Activated B cell treated with CpG ODN at 0.5 μM for 24 hours (primary cell): ENCODE measurements at regions of chr5 and their contacts with region 1.

Region 1: DNA sequence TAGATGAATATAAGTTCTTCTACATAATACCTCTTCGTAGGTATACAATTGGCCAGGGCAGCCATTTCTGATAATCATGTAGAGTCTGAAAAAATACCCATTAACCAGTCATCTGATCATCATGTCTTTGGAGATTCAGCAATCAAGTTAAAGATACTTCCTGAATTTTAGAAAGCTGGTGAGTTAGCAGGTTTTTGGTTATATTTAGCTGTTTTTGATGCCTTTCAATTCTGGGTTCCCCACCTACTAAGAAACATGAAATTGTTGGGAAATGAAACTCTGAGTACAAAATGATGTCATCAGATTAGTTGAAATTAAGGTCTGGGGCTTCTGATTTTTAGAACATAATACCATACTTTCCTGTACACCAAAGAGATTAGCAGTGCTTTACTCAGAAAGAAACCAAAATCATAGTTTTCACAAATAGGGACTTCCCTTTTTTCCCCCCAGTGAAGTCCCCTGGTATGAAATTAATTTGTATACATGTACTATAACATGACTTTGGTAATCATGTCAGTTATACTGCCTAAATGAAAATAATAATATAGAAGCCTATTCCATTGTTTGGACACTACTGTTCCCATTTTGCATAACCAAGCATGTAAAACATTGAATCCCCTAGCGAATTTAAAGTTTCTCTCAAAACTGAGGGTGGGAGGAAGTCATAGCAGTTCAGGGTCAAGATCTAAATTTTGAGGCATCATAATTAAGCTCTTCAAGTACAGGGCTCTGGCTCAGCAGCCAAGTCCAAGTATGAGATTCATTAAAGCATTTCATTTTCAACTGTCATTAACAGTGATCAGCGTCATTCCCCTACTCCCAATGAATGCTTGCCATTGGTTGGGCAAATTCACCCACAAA is 17.9 kb downstream of the PRLR start:
- DNase-seq: no peak
- ATAC-seq: peak; percentile 86
- H3K4me3 Mint-ChIP-seq: peak overlapping the region; percentile 22
- H3K27ac Mint-ChIP-seq: peak overlapping the region; percentile 92
- H3K4me1 Mint-ChIP-seq: peaks cover 26% of the 10 kb centered on the region
- H3K27me3 Mint-ChIP-seq: peaks cover 2% of the 10 kb centered on the region
- CTCF ChIP-seq: no peak

Region 2: DNA sequence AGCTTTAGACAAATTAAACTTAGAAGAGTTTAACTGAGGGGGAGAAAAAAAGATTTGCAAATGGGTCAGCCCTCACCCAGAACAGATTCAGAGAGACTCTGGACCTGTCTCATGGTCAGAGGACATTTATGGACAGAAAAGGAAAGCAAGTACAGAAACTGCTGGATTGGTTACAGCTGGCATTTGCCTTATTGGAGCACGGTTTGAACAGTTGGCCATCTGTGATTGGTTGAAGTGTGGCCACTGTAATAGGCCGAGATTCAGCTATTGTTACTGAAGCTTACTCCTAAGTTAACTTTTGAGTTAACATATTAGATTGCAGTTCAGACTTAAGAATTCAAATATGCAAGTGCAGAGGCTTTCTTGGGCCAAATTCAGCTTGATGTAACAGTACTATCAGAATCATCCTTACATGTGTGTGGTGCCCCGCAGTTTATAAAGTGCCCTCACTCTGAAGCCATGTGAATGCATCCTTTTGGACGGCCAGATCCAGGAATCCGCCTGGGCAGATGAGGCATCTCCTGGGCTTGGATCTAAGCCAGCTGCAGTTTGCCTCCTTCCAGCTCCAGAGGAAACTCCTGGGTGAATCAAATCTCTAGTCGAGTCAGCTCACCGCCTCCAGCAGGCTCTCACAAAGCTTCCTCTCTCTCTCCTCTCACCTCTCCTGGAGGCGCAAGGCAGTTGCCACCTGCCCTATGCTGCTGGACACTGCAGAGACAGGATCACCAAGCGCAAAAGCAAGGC is 1485.8 kb before region 1 on chr5:
- CTCF ChIA-PET with region 1: no interaction called
- POLR2A ChIA-PET with region 1: no interaction called
- intact Hi-C with region 1: no loop called
- DNase-seq: no peak
- ATAC-seq: no peak
- H3K4me3 Mint-ChIP-seq: no peak overlapping the region
- H3K27ac Mint-ChIP-seq: no peak overlapping the region
- H3K4me1 Mint-ChIP-seq: no peaks in the 10 kb centered on the region
- H3K27me3 Mint-ChIP-seq: no peaks in the 10 kb centered on the region
- CTCF ChIP-seq: no peak

Region 3: GRCh38 chr5:34915139-34915855 is 297.1 kb before region 1 on chr5 and contains the starts of genes BRIX1 and RAD1:
- CTCF ChIA-PET with region 1: no interaction called
- POLR2A ChIA-PET with region 1: no interaction called
- intact Hi-C with region 1: loop called (anchors 1 kb)
- DNase-seq: peak; percentile 92
- ATAC-seq: peak; percentile 98
- H3K4me3 Mint-ChIP-seq: peak within 1 kb of the TSS; percentile 57
- H3K27ac Mint-ChIP-seq: no peak within 1 kb of the TSS
- H3K4me1 Mint-ChIP-seq: peaks cover 34% of the 10 kb centered on the region
- H3K27me3 Mint-ChIP-seq: no peaks in the 10 kb centered on the region
- CTCF ChIP-seq: no peak
- total RNA-seq, gene BRIX1: 40.6 and 42.4 TPM in 2 replicates
- total RNA-seq, gene RAD1: 20.2 and 24.4 TPM in 2 replicates

Region 4: DNA sequence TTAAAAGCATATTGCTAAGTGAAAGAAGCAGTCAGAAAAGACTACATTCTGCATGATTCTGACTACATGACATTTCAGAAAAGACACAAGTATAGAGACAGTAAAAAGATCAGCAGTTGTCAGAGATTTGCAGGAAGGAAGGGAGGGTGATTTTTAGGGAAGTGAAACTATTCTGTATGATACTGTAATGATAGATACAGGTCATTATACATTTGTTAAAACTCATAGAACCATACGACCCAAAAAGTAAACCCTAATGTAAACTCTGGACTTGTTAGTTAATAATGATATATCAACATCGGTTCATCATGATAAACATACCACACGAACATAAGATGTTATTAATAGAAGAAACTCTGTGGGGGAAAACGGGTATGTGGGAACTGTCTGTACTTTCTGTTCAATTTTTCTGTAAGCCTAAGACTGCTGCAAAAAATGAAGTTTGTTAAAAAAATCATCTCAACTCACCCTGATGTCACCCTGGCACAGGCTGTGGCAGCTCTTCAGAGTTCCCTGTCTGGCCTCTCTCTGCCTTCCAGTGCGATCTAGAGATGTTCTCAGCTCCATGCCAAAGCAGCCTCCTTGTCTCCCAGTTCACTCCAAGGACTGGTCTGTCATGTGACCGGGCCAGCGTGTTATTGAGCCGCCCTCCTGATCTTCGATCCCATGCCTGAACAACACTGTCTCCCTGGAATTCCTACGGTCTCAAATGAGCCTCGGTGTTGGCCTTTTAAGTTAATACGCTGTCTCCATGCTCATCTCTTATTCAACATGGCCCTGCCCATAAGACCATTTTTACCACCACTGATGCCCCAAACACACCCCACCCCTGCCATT is 17.5 kb before region 1 on chr5:
- CTCF ChIA-PET with region 1: no interaction called
- POLR2A ChIA-PET with region 1: interaction called, 9 read pairs
- intact Hi-C with region 1: loop called (anchors 1 kb)
- DNase-seq: no peak
- ATAC-seq: peak; percentile 95
- H3K4me3 Mint-ChIP-seq: peak overlapping the region; percentile 62
- H3K27ac Mint-ChIP-seq: peak overlapping the region; percentile 84
- H3K4me1 Mint-ChIP-seq: peaks cover 37% of the 10 kb centered on the region
- H3K27me3 Mint-ChIP-seq: no peaks in the 10 kb centered on the region
- CTCF ChIP-seq: no peak

Region 5: GRCh38 chr5:35230038-35230631 is 17.8 kb after region 1 on chr5 and contains the start of gene PRLR:
- CTCF ChIA-PET with region 1: no interaction called
- POLR2A ChIA-PET with region 1: interaction called, 7 read pairs
- intact Hi-C with region 1: loop called (anchors 2 kb)
- DNase-seq: no peak
- ATAC-seq: peak; percentile 35
- H3K4me3 Mint-ChIP-seq: peak within 1 kb of the TSS; percentile 84
- H3K27ac Mint-ChIP-seq: peak within 1 kb of the TSS; percentile 62
- H3K4me1 Mint-ChIP-seq: peaks cover 15% of the 10 kb centered on the region
- H3K27me3 Mint-ChIP-seq: peaks cover 43% of the 10 kb centered on the region
- CTCF ChIP-seq: no peak
- total RNA-seq, gene PRLR: 2.3 and 3.7 TPM in 2 replicates

Region 6: GRCh38 chr5:35416217-35416988 is 204.1 kb after region 1 on chr5:
- CTCF ChIA-PET with region 1: no interaction called
- POLR2A ChIA-PET with region 1: no interaction called
- intact Hi-C with region 1: no loop called
- DNase-seq: no peak
- ATAC-seq: no peak
- H3K4me3 Mint-ChIP-seq: no peak overlapping the region
- H3K27ac Mint-ChIP-seq: no peak overlapping the region
- H3K4me1 Mint-ChIP-seq: no peaks in the 10 kb centered on the region
- H3K27me3 Mint-ChIP-seq: no peaks in the 10 kb centered on the region
- CTCF ChIP-seq: no peak